Dendritic cell treated with granulocyte-macrophage colony-stimulating factor and Interleukin-4, amounts not matched to agents 40 ng/mL and 50 ng/mL, for 4 days (primary cell): ENCODE measurements at regions of chr6 and their contacts with region 1.

Region 1: DNA sequence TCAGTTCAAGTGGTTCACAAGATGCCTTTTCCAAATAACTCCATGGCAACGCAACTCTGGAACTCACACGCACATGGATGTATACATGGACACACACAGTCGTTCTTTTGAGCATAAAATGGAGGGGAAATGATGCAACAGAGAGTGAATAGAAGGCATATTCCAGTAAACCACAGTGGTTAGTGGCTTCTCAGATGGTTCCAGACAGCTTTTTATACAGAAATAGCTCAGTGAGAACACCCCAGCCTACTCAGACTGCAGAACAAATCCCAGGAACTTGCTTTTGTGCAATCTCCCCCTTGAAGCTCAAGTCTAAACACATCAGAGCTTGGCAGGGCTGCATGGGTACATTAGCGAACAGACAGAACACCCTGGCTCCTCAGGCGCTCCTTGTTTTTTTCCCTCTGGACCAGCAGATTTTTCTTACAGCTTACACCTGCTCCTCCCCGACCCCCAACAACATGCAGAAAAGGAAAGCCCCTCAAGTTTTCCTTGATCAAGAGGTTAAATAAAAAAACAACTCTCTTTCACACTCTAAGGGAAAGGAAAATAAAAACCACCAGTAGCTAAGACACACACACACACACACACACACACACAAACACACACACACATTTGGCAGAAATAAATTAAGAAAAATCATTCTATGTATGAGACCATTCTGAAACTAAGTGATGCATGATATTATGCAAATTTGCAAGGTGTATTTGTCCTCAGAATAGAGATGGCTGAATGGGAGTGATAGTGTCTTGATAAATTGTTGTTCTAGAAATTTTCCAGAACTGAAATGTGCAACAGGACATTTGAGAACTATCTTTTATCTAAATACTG is 51.2 kb upstream of the RANBP9 start:
- H3K4me3 Mint-ChIP-seq: peak overlapping the region; percentile 6
- H3K27ac Mint-ChIP-seq: peak overlapping the region; percentile 41
- H3K4me1 Mint-ChIP-seq: peaks cover 74% of the 10 kb centered on the region
- H3K27me3 Mint-ChIP-seq: peaks cover 8% of the 10 kb centered on the region

Region 2: GRCh38 chr6:13711733-13712598 is 50.9 kb before region 1 on chr6 and contains the start of gene RANBP9:
- intact Hi-C with region 1: loop called (anchors 5 kb)
- H3K4me3 Mint-ChIP-seq: peak within 1 kb of the TSS; percentile 94
- H3K27ac Mint-ChIP-seq: peak within 1 kb of the TSS; percentile 98
- H3K4me1 Mint-ChIP-seq: peaks cover 66% of the 10 kb centered on the region
- H3K27me3 Mint-ChIP-seq: no peaks in the 10 kb centered on the region